HCT116 (cell line): ENCODE measurements at regions of chr4 and their contacts with region 1.

Region 1: GRCh38 chr4:17636696-17637622 is 22.5 kb downstream of the MED28 start:
- DNase-seq: peak; percentile 36
- ATAC-seq: peak; percentile 96
- H3K4me3 ChIP-seq: no peak overlapping the region
- H3K27ac ChIP-seq: no peak overlapping the region
- H3K4me1 ChIP-seq: no peaks in the 10 kb centered on the region
- H3K27me3 ChIP-seq: no peaks in the 10 kb centered on the region
- CTCF ChIP-seq: peak; percentile 76 to 90 (median 84)
- POLR2A ChIP-seq: no peak
- RAD21 ChIP-seq: peak; percentile 75

Region 2: GRCh38 chr4:17511950-17512795 is 124.8 kb before region 1 on chr4 and contains the start of gene QDPR:
- CTCF ChIA-PET with region 1: no interaction called
- POLR2A ChIA-PET with region 1: no interaction called
- RAD21 ChIA-PET with region 1: no interaction called
- intact Hi-C with region 1: loop called (anchors 1 kb)
- DNase-seq: peak; percentile 63
- ATAC-seq: peak; percentile 97
- H3K4me3 ChIP-seq: peak within 1 kb of the TSS; percentile 80 to 93
- H3K27ac ChIP-seq: peak within 1 kb of the TSS; percentile 65
- H3K4me1 ChIP-seq: peaks cover 12 to 27% of the 10 kb centered on the region in 2 experiments
- H3K27me3 ChIP-seq: no peaks in the 10 kb centered on the region
- CTCF ChIP-seq: peak; percentile 13 to 57 (median 56); a peak in 5 of 6 replicates
- POLR2A ChIP-seq: peak; percentile 27
- RAD21 ChIP-seq: peak; percentile 63
- total RNA-seq, gene QDPR: 39.5 TPM

Region 3: DNA sequence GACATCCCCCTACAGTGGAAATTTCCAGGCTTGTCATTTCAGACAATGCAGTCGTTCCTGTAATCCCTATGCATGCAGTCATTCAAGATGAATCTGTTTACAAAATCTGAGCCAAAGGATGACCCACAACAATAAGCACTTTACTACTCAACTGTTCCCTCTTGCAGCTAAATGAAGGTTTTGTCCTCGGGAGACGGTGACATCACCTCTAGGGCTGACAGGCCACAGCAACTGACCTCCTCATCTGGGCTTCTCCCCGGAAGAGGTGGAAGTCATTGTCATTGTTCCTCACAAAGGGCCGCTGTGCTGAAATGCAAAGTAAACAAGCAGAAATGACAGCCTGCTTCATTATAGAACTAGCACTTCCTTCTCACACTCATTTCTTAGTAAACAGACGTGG is 92.8 kb before region 1 on chr4:
- CTCF ChIA-PET with region 1: interaction called, 11 read pairs
- POLR2A ChIA-PET with region 1: no interaction called
- RAD21 ChIA-PET with region 1: no interaction called
- intact Hi-C with region 1: loop called (anchors 1 kb)
- DNase-seq: no peak
- ATAC-seq: no peak
- H3K4me3 ChIP-seq: no peak overlapping the region
- H3K27ac ChIP-seq: no peak overlapping the region
- H3K4me1 ChIP-seq: no peaks in the 10 kb centered on the region; a peak in 1 of 4 replicates
- H3K27me3 ChIP-seq: no peaks in the 10 kb centered on the region
- CTCF ChIP-seq: no peak
- POLR2A ChIP-seq: no peak
- RAD21 ChIP-seq: no peak

Region 4: DNA sequence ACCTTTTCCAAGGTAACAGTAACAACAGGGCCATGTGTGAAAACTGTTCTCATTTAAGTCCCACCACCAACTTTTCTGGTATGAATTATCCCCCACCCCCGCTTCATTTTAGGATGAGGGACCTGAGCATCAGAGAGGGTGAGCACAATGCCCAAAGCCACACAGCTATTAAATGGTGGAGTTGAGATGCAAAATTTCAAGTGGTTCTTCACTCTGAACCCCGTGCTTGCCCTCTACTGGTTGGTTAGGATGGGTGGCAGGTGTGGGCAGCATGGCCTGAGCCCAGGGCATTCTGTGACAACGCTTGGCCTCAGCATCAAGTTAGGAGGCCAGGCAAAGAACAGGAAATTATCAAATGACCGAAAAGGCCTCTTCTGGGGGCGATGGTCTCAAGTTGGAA is 11.0 kb after region 1 on chr4:
- CTCF ChIA-PET with region 1: no interaction called
- POLR2A ChIA-PET with region 1: no interaction called
- RAD21 ChIA-PET with region 1: no interaction called
- intact Hi-C with region 1: no loop called
- DNase-seq: no peak
- ATAC-seq: peak; percentile 83
- H3K4me3 ChIP-seq: no peak overlapping the region
- H3K27ac ChIP-seq: no peak overlapping the region
- H3K4me1 ChIP-seq: no peaks in the 10 kb centered on the region
- H3K27me3 ChIP-seq: no peaks in the 10 kb centered on the region
- CTCF ChIP-seq: peak in 2 of 3 experiments; percentile 33 to 36; a peak in 3 of 6 replicates
- POLR2A ChIP-seq: no peak
- RAD21 ChIP-seq: peak; percentile 30; the same call in 1 of the 2 replicates

Region 5: DNA sequence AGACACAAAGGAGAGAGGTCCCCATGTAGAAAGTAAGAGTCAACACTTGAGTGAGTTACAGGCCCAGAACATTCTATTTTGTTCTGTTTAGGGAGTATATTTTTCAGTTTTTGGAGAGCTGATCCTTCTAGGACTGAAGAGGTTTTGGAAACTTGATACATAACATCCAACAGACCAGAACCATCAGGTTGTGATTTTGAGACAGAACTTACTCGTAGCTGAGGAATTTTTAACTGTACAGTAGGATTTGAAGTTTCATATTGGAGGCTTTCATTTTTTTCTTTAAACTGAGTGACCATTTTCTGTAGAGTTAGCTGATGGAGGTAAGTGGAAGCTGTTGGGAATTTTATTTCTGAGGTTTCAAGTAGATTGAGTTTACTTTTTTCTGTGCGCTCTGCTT is 247.1 kb after region 1 on chr4:
- CTCF ChIA-PET with region 1: no interaction called
- POLR2A ChIA-PET with region 1: no interaction called
- RAD21 ChIA-PET with region 1: no interaction called
- intact Hi-C with region 1: no loop called
- DNase-seq: no peak
- ATAC-seq: no peak
- H3K4me3 ChIP-seq: no peak overlapping the region
- H3K27ac ChIP-seq: no peak overlapping the region
- H3K4me1 ChIP-seq: no peaks in the 10 kb centered on the region
- H3K27me3 ChIP-seq: no peaks in the 10 kb centered on the region
- CTCF ChIP-seq: no peak
- POLR2A ChIP-seq: no peak
- RAD21 ChIP-seq: no peak

Region 6: DNA sequence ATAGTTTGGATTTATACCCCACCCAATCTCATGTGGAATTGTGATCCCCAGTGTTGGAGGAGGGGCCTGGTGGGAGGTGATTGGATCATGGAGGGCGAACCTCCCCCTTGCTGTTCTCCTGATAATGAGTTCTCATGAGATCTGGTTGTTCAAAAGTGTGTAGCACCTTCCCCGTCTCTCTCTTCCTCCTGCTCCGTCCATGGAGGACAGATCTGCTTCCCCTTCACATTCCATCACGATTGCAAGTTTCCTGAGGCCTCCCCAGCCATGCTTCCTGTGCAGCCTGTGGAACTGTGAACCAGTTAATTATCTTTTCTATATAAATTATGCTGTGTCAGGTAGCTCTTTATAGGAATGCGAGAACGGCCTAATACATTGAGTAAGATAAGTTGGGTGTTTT is 903.4 kb after region 1 on chr4:
- CTCF ChIA-PET with region 1: no interaction called
- POLR2A ChIA-PET with region 1: no interaction called
- RAD21 ChIA-PET with region 1: no interaction called
- intact Hi-C with region 1: no loop called
- DNase-seq: no peak
- ATAC-seq: no peak
- H3K4me3 ChIP-seq: no peak overlapping the region
- H3K27ac ChIP-seq: no peak overlapping the region
- H3K4me1 ChIP-seq: no peaks in the 10 kb centered on the region
- H3K27me3 ChIP-seq: no peaks in the 10 kb centered on the region
- CTCF ChIP-seq: no peak
- POLR2A ChIP-seq: no peak
- RAD21 ChIP-seq: no peak